ENCODE measurements at regions of chr12 and their contacts with region 1.

Region 1: DNA sequence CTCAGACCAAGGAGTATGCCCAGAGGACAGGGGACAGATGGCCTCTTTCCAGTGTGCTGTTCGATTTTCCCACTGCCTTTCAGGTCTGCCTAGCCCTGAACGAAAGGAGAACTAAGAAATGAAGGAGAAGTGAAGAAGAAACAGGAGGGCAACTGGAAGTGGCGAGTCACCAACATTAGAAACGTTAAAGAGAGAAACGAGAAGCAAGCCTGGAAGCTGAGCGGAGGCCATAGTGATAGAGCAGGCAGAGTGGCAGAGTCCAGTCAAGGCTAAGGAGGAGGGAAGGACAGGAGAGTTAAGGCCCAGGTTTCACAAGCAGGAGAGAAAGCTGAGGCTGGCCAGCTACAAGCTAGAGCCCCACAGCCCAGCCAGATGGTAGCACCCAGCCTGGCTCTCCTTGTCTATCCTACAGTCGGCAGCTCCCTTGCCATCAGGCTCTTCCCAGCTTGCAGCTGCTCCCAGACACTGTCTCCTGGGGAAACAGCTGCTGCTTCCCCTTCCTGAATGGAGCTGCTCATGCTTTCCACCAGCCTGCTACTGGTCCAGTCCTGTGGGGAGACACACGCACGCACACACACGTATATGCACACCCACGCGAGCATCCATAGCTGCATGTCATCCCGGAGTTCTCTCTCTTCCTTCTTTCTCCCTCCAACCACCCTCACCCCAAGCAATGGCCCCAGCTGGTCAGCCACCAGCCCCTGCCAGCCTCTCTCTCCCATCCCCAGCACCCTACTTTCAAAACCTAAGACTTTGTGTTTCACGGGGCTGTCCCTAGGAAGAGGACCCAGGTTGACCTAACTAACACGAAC is 139.7 kb upstream of the CCND2 start:
- H3K4me3 Mint-ChIP-seq: no peak overlapping the region
- H3K27ac Mint-ChIP-seq: peak overlapping the region; percentile 9
- H3K4me1 Mint-ChIP-seq: peaks cover 52% of the 10 kb centered on the region
- H3K27me3 Mint-ChIP-seq: peaks cover 31% of the 10 kb centered on the region

Region 2: GRCh38 chr12:4118017-4118510 is 15.8 kb before region 1 on chr12:
- intact Hi-C with region 1: loop called (anchors 2 kb)
- H3K4me3 Mint-ChIP-seq: peak overlapping the region; percentile 18
- H3K27ac Mint-ChIP-seq: peak overlapping the region; percentile 11
- H3K4me1 Mint-ChIP-seq: peaks cover 39% of the 10 kb centered on the region
- H3K27me3 Mint-ChIP-seq: peaks cover 85% of the 10 kb centered on the region

Region 3: GRCh38 chr12:4518106-4518728 is 384.4 kb after region 1 on chr12:
- intact Hi-C with region 1: no loop called
- H3K4me3 Mint-ChIP-seq: no peak overlapping the region
- H3K27ac Mint-ChIP-seq: no peak overlapping the region
- H3K4me1 Mint-ChIP-seq: no peaks in the 10 kb centered on the region
- H3K27me3 Mint-ChIP-seq: no peaks in the 10 kb centered on the region